ENCODE measurements at regions of chr1 and their contacts with region 1.

Region 1: GRCh38 chr1:160539990-160540858 is 17.2 kb upstream of the SLAMF6 start:
- DNase-seq: peak; percentile 65
- CTCF ChIP-seq: no peak

Region 2: GRCh38 chr1:160291248-160292220 is 248.7 kb before region 1 on chr1:
- CTCF ChIA-PET with region 1: no interaction called
- POLR2A ChIA-PET with region 1: no interaction called
- DNase-seq: peak; percentile 64
- CTCF ChIP-seq: peak; percentile 75

Region 3: DNA sequence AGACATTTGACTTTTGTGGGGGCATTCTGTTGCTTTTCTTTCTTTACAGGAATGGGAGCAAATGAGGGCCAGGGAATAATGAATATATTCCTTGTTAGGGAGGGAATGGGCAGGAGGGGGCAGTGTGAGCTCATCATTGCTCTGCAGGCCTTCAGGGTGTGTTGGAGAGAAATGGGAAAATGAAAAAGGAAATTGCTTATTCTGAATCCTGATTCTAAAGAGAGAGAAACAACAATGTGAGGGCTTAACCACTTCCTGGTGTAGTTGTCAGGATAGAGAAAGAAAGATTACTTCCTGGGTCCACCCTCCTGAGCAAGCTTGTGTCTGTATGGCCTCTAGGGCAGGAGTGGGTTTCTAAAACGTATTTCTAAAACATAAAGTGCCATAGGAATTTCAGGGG is 111.6 kb before region 1 on chr1:
- CTCF ChIA-PET with region 1: interaction called, 12 read pairs
- POLR2A ChIA-PET with region 1: no interaction called
- DNase-seq: peak; percentile 47
- CTCF ChIP-seq: peak; percentile 53

Region 4: GRCh38 chr1:160519642-160520435 is 20.4 kb before region 1 on chr1:
- CTCF ChIA-PET with region 1: interaction called, 14 read pairs
- POLR2A ChIA-PET with region 1: no interaction called
- DNase-seq: no peak
- CTCF ChIP-seq: no peak

Region 5: GRCh38 chr1:160550572-160551034 is 10.4 kb after region 1 on chr1:
- CTCF ChIA-PET with region 1: interaction called, 163 read pairs
- POLR2A ChIA-PET with region 1: no interaction called
- DNase-seq: no peak
- CTCF ChIP-seq: peak; percentile 34

Region 6: GRCh38 chr1:160567858-160568682 is 27.8 kb after region 1 on chr1:
- CTCF ChIA-PET with region 1: interaction called, 163 read pairs
- POLR2A ChIA-PET with region 1: no interaction called
- DNase-seq: no peak
- CTCF ChIP-seq: no peak